Heart left ventricle (tissue), 16 donors: ENCODE measurements at regions of chr7 and their contacts with region 1.

Region 1: DNA sequence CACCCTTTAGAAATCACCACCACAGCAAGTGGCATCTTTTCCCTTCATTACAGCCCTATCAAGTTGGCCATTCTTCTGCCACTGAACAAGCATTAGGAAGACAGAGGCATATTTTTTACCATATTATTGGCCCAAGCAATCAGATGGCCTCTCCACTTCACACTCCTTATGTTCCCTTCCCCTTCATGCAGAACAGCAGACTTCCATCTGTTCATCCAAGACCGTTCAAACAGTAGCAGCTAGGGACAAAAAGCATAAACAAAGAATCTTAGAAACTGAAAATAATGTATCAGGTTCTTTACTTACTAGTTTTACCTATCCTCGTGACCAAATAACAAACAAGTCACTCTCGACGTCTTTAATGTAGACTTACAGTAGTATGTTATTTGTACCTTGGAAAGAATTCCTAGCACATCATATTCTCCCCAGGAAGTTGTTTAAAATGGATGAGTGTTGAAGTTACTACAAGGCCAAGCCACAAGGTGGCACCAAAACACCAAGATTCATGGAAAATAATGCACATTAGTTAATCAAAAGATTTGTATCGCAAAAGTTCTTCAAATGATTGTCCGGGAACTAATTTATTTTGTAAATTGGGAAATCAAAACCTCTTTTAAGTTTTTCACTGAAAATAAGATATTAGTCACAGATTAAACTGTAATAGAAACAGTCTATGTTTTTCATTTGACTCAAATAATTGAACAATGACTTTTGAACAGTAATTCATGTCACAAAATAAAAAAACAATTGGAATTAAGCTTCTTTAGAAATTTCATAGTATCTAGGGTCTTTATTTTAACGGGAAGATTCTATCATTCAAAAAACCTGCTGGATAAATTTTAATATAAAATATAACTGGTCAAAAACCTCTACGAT is 112.1 kb downstream of the VPS41 start:
- DNase-seq: peak in 3 of 5 donors; percentile 23 to 36 (median 32)
- ATAC-seq: no peak
- H3K4me3 ChIP-seq: no peak overlapping the region
- H3K27ac ChIP-seq: no peak overlapping the region
- H3K4me1 ChIP-seq: no peaks in the 10 kb centered on the region
- H3K27me3 ChIP-seq: no peaks in the 10 kb centered on the region
- CTCF ChIP-seq: peak; percentile 67 to 91 (median 80)
- POLR2A ChIP-seq: no peak

Region 2: DNA sequence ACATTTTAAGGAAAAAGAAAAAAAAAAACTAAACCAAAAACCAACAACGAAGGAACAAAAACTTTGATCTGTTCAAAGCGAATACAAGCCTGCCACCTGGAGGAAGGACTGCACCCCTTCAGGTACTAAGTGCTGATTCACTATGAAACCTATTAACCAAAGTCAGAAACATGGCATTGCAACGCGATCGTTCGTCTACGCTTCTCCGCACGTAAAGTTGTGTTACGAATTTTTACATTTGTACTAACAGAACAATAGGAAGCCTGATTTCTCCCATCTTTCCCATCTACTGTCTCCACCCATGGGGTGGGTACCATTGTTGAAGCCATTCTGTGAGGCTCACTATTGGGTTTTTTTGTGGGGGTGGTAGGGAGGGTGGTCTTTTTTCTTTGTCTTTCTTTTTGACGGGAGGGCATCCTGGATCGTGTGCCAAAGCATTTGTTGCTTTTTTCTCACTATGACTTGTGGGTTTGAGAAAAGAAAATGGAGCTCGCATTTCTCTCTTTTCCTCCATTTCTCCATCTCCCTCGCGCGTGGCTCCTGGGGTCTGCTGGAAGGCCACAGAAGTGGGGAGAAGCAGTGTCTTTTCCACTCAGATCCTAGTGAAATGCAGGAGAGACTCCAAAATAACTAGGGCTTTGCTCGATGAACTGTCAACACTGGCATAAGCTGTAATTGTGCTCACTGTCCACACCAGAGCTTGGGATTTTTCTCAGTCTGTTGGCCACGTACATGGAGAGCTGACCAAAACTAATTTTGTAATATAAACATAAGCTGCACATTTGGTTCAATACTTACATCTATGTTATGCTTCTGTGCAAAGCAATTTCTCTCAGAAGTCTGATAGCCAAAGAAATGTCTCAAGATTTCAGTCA is 668.4 kb after region 1 on chr7:
- intact Hi-C with region 1: loop called (anchors 2 to 5 kb)
- DNase-seq: peak in 1 of 5 donors; percentile 31
- ATAC-seq: peak in 3 of 4 donors; percentile 52 to 78 (median 76)
- H3K4me3 ChIP-seq: peak overlapping the region in 1 of 12 donors; percentile 9
- H3K27ac ChIP-seq: no peak overlapping the region
- H3K4me1 ChIP-seq: peaks cover 0 to 5% (median 0%) of the 10 kb centered on the region in 12 donors
- H3K27me3 ChIP-seq: peaks cover 0 to 9% (median 0%) of the 10 kb centered on the region in 9 donors
- CTCF ChIP-seq: peak; percentile 52 to 81 (median 72)
- POLR2A ChIP-seq: no peak

Region 3: DNA sequence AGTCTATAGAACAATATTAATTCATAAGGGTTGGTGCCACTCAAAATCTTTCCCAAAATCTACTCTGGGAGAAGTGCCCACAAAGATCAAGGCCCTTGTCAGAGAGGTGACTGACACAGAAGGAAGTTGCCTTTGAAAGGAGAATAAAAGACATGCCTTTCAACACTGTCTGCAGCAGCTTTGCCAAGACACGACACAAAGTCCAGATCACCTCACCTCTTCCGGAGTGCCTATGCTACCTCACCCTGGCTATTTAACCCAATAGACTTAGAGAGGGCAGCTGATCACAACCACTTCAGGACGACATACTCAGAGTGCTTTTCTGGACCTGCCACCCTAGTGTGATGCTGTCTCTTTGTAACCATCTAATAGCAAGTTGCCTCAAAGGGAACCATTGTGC is 720.4 kb after region 1 on chr7:
- intact Hi-C with region 1: loop called (anchors 1 to 5 kb)
- DNase-seq: no peak
- ATAC-seq: no peak
- H3K4me3 ChIP-seq: no peak overlapping the region
- H3K27ac ChIP-seq: no peak overlapping the region
- H3K4me1 ChIP-seq: peaks cover 0 to 6% (median 0%) of the 10 kb centered on the region in 12 donors
- H3K27me3 ChIP-seq: peaks cover 0 to 9% (median 0%) of the 10 kb centered on the region in 9 donors
- CTCF ChIP-seq: no peak
- POLR2A ChIP-seq: no peak

Region 4: DNA sequence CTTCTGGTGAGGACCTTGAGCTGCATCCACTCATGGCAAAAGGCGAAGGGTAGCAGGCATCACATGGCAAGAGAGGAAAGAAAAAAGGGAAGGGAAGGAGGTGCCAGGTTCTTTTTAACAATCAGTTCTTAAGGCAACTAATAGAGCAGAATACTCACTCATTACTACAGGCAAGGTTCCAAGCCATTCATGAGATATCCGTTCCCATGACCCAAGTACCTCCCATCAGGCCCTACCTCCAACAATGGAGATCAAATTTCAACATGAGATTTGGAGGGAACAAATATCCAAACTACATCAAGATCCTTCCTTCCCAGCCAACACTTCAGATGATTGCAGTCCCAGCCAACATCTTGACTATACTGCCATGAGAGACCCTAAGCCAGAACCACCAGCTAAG is 730.4 kb after region 1 on chr7:
- intact Hi-C with region 1: loop called in 1 of 10 experiments (anchors 5 kb)
- DNase-seq: no peak
- ATAC-seq: peak in 1 of 4 donors; percentile 32
- H3K4me3 ChIP-seq: no peak overlapping the region
- H3K27ac ChIP-seq: no peak overlapping the region
- H3K4me1 ChIP-seq: no peaks in the 10 kb centered on the region
- H3K27me3 ChIP-seq: peaks cover 0 to 7% (median 0%) of the 10 kb centered on the region in 9 donors
- CTCF ChIP-seq: no peak
- POLR2A ChIP-seq: no peak